Left lung (tissue), 14 donors: ENCODE measurements at regions of chr14 and their contacts with region 1.

Region 1: GRCh38 chr14:60622917-60623257 is 26.4 kb downstream of the SIX1 start:
- DNase-seq: no peak
- ATAC-seq: no peak
- H3K4me3 ChIP-seq: no peak overlapping the region
- H3K27ac ChIP-seq: peak overlapping the region in 1 of 2 donors; percentile 33
- H3K4me1 ChIP-seq: peaks cover 0 to 5% of the 10 kb centered on the region in 2 donors
- H3K27me3 ChIP-seq: peaks cover 0 to 9% of the 10 kb centered on the region in 2 donors
- CTCF ChIP-seq: no peak

Region 2: GRCh38 chr14:61252369-61253063 is 629.6 kb after region 1 on chr14:
- intact Hi-C with region 1: loop called in 1 of 2 experiments (anchors 10 kb)
- DNase-seq: peak in 3 of 4 donors; percentile 71 to 92 (median 79)
- ATAC-seq: peak; percentile 100
- H3K4me3 ChIP-seq: no peak overlapping the region
- H3K27ac ChIP-seq: no peak overlapping the region
- H3K4me1 ChIP-seq: peaks cover 4 to 13% of the 10 kb centered on the region in 2 donors
- H3K27me3 ChIP-seq: no peaks in the 10 kb centered on the region
- CTCF ChIP-seq: peak; percentile 77 to 78